ENCODE measurements at regions of chr9 and their contacts with region 1.

Region 1: DNA sequence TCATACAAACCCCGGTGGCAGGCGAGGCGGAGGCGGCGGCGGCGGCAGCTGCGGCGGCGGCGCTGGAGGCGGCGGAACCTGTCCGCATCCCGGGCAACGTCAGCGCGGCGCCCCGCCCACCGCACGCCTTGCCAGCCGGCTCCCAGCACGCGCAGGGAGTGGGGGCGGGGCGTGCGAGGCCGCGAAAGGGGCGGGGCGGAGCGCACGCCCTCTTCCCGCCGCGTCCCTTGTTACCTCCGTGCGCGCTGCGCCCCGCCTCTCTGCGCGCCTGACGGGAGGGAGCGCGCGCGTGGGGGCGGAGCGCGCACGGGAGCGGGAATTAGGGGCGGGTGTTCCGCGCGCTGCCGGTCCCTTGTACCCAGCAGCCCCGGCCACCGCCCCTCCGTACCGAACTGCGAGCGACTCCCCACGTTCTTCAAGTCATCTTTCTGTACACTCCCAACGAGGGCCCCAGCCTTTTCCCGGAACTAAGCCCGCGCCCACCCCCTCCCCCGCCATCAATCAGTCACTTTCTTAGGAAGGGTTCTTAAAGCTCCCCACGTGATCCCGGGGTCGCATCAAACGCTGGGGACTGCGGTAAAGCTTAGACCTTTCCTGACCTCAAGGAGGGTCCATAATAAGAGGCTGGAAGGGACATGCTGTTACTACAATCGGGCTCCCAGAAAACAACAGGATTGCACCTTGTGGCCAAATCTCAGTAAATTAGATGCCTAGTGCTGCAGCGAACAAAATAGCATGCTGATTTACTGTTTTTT is at the start of gene AGTPBP1:
- H3K4me3 Mint-ChIP-seq: peak within 1 kb of the TSS; percentile 85
- H3K27ac Mint-ChIP-seq: peak within 1 kb of the TSS; percentile 96
- H3K4me1 Mint-ChIP-seq: peaks cover 47% of the 10 kb centered on the region
- H3K27me3 Mint-ChIP-seq: no peaks in the 10 kb centered on the region

Region 2: GRCh38 chr9:85702726-85703289 is 39.2 kb before region 1 on chr9:
- intact Hi-C with region 1: loop called (anchors 5 kb)
- H3K4me3 Mint-ChIP-seq: no peak overlapping the region
- H3K27ac Mint-ChIP-seq: peak overlapping the region; percentile 37
- H3K4me1 Mint-ChIP-seq: peaks cover 64% of the 10 kb centered on the region
- H3K27me3 Mint-ChIP-seq: no peaks in the 10 kb centered on the region

Region 3: DNA sequence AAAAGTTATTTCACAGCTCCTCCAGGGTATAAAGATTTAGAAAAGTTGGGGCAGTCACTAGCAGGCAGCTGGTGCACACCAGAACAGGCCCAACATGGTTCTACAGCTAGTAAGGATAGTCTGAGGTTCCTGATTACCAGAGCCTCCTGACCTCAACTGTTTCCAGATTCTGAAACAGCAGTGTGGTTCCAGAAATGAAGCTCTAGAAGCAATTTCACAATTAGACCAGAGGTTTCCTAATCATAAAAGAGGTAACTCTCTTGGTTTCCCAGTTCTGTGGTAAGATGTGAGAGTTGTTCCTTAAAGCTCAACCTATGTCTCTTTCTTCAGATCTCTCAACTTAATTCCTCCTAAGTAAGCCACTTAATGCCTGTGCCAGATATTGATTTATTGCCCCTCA is 12.2 kb before region 1 on chr9:
- intact Hi-C with region 1: loop called (anchors 1 kb)
- H3K4me3 Mint-ChIP-seq: no peak overlapping the region
- H3K27ac Mint-ChIP-seq: peak overlapping the region; percentile 80
- H3K4me1 Mint-ChIP-seq: peaks cover 63% of the 10 kb centered on the region
- H3K27me3 Mint-ChIP-seq: no peaks in the 10 kb centered on the region

Region 4: DNA sequence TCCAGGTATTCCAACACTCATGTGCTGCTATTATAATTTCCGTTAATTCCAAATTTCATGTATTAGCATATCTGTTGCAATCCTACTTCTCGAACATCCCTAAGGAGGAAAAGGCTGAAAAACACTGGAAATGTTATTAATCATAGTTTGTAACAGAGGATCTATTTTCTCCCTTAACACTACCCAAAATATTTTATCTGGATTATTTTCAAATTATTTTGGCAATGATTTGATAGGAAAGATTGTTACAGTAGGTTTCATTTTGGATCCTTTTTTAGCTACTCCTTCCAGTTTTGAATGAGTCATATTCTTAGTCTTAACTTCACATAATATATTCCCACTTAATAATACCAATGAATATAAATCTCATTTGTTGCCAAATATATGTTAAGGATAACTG is 185.0 kb after region 1 on chr9:
- intact Hi-C with region 1: no loop called
- H3K4me3 Mint-ChIP-seq: no peak overlapping the region
- H3K27ac Mint-ChIP-seq: no peak overlapping the region
- H3K4me1 Mint-ChIP-seq: no peaks in the 10 kb centered on the region
- H3K27me3 Mint-ChIP-seq: peaks cover 8% of the 10 kb centered on the region

Region 5: DNA sequence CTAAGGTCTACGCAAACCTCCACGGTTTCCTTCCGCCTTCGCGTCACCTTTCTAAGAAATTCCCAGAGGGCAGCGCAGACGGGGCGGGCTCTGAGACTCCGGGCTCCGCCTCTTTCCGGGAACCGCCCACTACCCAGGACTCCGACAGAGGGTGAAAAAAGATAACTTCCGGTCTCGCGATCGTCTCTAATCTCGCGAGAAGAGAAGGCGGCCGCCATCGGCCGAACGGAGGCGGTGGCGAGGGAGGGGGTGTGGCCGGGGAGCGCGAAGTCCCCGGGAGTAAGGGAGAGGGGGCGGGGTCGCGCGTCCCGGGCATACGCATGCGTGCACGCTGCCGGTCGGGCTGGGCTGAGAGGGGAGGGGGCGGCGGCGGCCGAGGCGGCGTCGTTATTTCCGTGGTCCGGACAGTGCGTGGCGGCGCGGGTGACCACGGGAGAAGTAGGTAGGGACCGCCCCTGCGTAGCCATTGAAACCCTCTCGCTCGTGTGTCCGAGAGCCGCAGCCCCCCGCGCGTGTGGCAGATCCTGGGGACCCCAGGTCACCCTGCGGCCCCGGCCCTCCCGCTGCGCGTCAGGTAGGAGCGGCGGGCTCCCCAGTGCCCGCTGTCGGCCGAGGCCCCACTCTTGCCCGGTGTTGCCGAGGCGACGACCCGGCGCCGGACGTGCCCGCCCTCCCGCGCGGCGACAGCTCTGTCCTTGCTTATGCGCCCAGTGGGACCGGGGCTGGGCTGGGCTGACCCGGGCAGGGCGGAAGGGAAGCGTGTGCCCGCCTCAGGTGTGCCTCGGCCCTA is 199.0 kb after region 1 on chr9 and contains the start of gene NAA35:
- intact Hi-C with region 1: loop called (anchors 5 kb)
- H3K4me3 Mint-ChIP-seq: peak within 1 kb of the TSS; percentile 92
- H3K27ac Mint-ChIP-seq: peak within 1 kb of the TSS; percentile 85
- H3K4me1 Mint-ChIP-seq: peaks cover 6% of the 10 kb centered on the region
- H3K27me3 Mint-ChIP-seq: no peaks in the 10 kb centered on the region

Region 6: GRCh38 chr9:86282077-86282978 is 540.3 kb after region 1 on chr9 and contains the start of gene ISCA1:
- intact Hi-C with region 1: loop called (anchors 5 kb)
- H3K4me3 Mint-ChIP-seq: peak within 1 kb of the TSS; percentile 92
- H3K27ac Mint-ChIP-seq: peak within 1 kb of the TSS; percentile 91
- H3K4me1 Mint-ChIP-seq: peaks cover 62% of the 10 kb centered on the region
- H3K27me3 Mint-ChIP-seq: peaks cover 3% of the 10 kb centered on the region

Measured in dendritic cell treated with granulocyte-macrophage colony-stimulating factor and Interleukin-4, amounts not matched to agents 40 ng/mL and 50 ng/mL, for 4 days (primary cell).